Dorsolateral prefrontal cortex (tissue), 120 donors: ENCODE measurements at regions of chr19 and their contacts with region 1.

Region 1: DNA sequence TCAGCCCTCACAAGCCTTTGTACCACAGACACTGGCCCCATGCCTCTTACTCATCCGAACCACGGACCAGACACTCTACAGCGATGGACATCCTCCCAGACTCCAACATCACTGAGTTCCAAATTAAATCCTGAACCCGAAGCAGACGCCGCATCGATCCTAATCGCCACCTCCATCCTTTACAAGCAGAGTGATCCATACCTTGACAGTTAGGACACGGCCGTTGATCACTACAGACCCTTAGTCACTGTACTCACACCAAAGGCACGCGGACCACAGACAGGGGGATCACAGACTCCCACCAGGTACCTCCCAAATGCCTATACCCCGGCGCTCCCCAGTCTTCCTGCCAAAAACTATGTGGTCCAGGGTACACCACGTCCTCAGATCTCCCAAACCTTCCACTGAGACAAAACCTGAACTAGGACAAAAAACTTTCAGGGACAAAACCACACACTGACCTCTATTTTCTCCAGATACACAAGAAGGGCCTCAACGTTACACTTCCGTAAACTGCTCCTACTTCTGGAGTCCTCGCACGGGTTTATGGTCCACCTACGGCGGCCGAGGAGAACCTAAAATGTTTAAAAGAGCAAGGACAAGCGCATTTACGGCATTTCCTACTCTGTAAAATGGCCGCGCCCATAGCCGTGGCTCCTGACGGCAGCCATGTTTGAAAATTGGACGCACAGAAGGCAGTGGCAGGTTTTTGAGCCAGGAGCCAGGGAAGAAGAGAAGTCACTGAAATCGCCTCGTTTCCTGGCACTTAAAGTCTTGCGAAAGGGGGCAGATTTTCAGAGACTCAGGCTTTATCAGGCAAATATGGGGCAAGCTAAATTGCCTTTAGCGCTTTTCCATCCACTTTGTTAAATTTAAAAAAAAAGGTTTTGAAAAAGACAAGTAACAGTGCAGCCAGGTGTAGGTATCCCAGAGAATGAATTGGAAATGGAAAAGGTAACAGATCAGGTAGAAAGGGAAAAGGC is at the start of gene ZNF350:
- DNase-seq: peak; percentile 91 to 99 (median 96)
- H3K4me3 ChIP-seq: peak within 1 kb of the TSS; percentile 59 to 98 (median 84)
- H3K27ac ChIP-seq: peak within 1 kb of the TSS in 50 of 59 donors; percentile 9 to 92 (median 62)
- H3K27me3 ChIP-seq: no peaks in the 10 kb centered on the region
- CTCF ChIP-seq: peak in 28 of 56 donors; percentile 4 to 54 (median 34)
- total RNA-seq, gene ZNF350: 8.6 to 24.7 (median 13.9) TPM

Region 2: DNA sequence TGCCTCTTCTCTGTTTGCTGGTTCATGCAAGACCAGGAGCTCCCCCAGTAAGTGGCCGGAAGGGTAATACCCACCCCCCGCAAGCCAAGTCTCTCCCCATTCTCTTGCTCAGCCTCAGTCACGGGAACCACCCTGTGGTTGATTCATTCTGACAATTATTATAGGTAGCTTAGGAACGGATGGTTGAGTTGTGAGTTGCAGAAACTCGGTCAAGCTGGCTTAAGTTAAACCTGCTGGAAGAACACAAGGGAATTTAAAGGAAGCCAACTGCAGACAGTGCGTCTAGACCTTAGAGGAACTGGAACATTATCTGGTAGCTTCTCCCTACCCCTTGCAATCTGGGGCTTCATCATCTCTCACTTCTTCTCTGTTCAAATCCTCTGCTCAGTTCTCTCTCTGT is 243.8 kb before region 1 on chr19:
- intact Hi-C with region 1: no loop called
- DNase-seq: no peak
- H3K4me3 ChIP-seq: no peak overlapping the region
- H3K27ac ChIP-seq: no peak overlapping the region
- H3K27me3 ChIP-seq: peaks cover 0 to 5% (median 0%) of the 10 kb centered on the region in 45 donors
- CTCF ChIP-seq: no peak

Region 3: GRCh38 chr19:51887522-51888498 is 98.8 kb before region 1 on chr19 and contains the start of gene ZNF577:
- intact Hi-C with region 1: loop called in 1 of 2 experiments (anchors 5 kb)
- DNase-seq: peak; percentile 77 to 92 (median 88)
- H3K4me3 ChIP-seq: peak within 1 kb of the TSS; percentile 24 to 76 (median 66)
- H3K27ac ChIP-seq: peak within 1 kb of the TSS in 37 of 59 donors; percentile 4 to 85 (median 60)
- H3K27me3 ChIP-seq: no peaks in the 10 kb centered on the region
- CTCF ChIP-seq: peak in 10 of 56 donors; percentile 4 to 33 (median 11)
- total RNA-seq, gene ZNF577: 18.9 to 73.4 (median 37.6) TPM

Region 4: GRCh38 chr19:52007806-52008557 is 21.4 kb after region 1 on chr19 and contains the start of gene ZNF615:
- intact Hi-C with region 1: loop called in 1 of 2 experiments (anchors 1 kb)
- DNase-seq: peak; percentile 87 to 95 (median 94)
- H3K4me3 ChIP-seq: peak within 1 kb of the TSS; percentile 41 to 96 (median 87)
- H3K27ac ChIP-seq: peak within 1 kb of the TSS; percentile 63 to 97 (median 90)
- H3K27me3 ChIP-seq: no peaks in the 10 kb centered on the region
- CTCF ChIP-seq: peak in 19 of 56 donors; percentile 3 to 47 (median 20)
- total RNA-seq, gene ZNF615: 15.5 to 29.9 (median 22.6) TPM

Region 5: DNA sequence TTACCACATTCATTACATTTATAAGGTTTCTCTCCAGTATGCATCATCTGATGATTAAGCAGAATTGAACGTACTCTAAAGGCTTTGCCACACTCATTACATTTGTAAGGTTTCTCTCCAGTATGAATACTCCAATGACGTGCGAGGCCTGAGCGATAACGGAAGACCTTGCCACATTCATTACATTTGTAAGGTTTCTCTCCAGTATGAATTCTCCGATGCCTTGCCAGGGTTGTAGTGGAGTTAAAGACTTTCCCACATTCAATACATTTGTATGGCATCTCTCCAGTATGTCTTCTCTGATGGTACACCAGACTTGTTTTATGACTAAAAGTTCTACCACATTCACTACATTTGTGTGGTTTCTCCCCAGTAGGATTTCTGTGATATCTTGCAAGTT is 78.8 kb after region 1 on chr19:
- intact Hi-C with region 1: no loop called
- DNase-seq: no peak
- H3K4me3 ChIP-seq: no peak overlapping the region
- H3K27ac ChIP-seq: no peak overlapping the region
- H3K27me3 ChIP-seq: no peaks in the 10 kb centered on the region
- CTCF ChIP-seq: no peak